Tibial artery (tissue), 4 donors: ENCODE measurements at regions of chr7 and their contacts with region 1.

Region 1: DNA sequence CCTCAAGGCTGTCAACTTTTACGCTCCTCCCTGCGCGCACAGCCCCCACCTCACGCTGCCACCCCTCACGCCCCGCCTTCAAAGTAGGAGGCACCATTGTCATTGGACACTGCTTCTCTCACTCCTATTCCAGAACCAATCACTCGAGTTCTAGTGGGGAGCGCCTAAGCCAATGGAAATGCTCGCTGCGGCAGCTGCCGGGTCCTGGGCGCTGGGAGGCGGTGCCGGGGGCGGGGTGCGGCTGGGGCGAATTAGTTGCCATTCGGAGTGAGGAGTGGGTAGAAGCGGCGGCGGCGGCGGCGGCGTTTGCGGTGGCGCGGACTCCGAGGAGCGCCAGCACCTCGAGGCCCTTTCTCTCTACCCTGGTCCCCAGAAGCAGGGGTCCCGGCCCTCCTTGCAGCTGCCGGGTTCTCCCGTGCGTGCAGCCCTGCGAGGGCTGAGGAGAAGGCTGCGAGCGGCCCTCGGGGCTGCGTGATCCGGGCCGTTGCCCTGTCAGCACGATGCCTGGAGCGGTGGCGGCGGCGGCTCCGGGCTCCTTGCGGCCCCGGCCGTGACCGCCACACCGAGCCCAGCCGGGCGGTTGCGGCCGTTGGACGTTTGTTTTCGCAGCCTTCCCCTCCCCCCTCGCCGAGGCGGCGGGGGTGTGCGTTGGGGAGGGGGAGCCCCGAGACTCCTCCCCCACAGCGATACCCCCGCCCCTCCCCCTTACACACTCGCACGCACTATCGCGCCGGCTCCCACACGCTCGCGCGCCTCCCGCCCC is at the start of gene GLCCI1:
- DNase-seq: peak; percentile 96 to 98
- H3K4me3 ChIP-seq: peak within 1 kb of the TSS; percentile 99
- H3K27ac ChIP-seq: peak within 1 kb of the TSS; percentile 98
- H3K4me1 ChIP-seq: peaks cover 0 to 30% (median 11%) of the 10 kb centered on the region in 4 donors
- H3K27me3 ChIP-seq: no peaks in the 10 kb centered on the region
- CTCF ChIP-seq: peak in 1 of 2 experiments; percentile 17

Region 2: GRCh38 chr7:7640221-7641128 is 328.2 kb before region 1 on chr7 and contains the start of gene UMAD1:
- intact Hi-C with region 1: loop called (anchors 10 kb)
- DNase-seq: peak; percentile 99
- H3K4me3 ChIP-seq: peak within 1 kb of the TSS; percentile 69 to 77
- H3K27ac ChIP-seq: peak within 1 kb of the TSS; percentile 86 to 90
- H3K4me1 ChIP-seq: peaks cover 0 to 15% (median 2%) of the 10 kb centered on the region in 4 donors
- H3K27me3 ChIP-seq: no peaks in the 10 kb centered on the region
- CTCF ChIP-seq: peak in 1 of 2 experiments; percentile 6

Region 3: GRCh38 chr7:7732566-7733290 is 236.0 kb before region 1 on chr7:
- intact Hi-C with region 1: no loop called
- DNase-seq: no peak
- H3K4me3 ChIP-seq: no peak overlapping the region
- H3K27ac ChIP-seq: peak overlapping the region; percentile 34
- H3K4me1 ChIP-seq: peaks cover 0 to 27% (median 13%) of the 10 kb centered on the region in 4 donors
- H3K27me3 ChIP-seq: no peaks in the 10 kb centered on the region
- CTCF ChIP-seq: no peak

Region 4: GRCh38 chr7:7746458-7746857 is 222.3 kb before region 1 on chr7:
- intact Hi-C with region 1: no loop called
- DNase-seq: no peak
- H3K4me3 ChIP-seq: no peak overlapping the region
- H3K27ac ChIP-seq: no peak overlapping the region
- H3K4me1 ChIP-seq: peaks cover 0 to 7% (median 0%) of the 10 kb centered on the region in 4 donors
- H3K27me3 ChIP-seq: no peaks in the 10 kb centered on the region
- CTCF ChIP-seq: no peak

Region 5: GRCh38 chr7:8022628-8023027 is 53.9 kb after region 1 on chr7:
- intact Hi-C with region 1: no loop called
- DNase-seq: no peak
- H3K4me3 ChIP-seq: no peak overlapping the region
- H3K27ac ChIP-seq: no peak overlapping the region
- H3K4me1 ChIP-seq: no peaks in the 10 kb centered on the region
- H3K27me3 ChIP-seq: no peaks in the 10 kb centered on the region
- CTCF ChIP-seq: no peak

Region 6: DNA sequence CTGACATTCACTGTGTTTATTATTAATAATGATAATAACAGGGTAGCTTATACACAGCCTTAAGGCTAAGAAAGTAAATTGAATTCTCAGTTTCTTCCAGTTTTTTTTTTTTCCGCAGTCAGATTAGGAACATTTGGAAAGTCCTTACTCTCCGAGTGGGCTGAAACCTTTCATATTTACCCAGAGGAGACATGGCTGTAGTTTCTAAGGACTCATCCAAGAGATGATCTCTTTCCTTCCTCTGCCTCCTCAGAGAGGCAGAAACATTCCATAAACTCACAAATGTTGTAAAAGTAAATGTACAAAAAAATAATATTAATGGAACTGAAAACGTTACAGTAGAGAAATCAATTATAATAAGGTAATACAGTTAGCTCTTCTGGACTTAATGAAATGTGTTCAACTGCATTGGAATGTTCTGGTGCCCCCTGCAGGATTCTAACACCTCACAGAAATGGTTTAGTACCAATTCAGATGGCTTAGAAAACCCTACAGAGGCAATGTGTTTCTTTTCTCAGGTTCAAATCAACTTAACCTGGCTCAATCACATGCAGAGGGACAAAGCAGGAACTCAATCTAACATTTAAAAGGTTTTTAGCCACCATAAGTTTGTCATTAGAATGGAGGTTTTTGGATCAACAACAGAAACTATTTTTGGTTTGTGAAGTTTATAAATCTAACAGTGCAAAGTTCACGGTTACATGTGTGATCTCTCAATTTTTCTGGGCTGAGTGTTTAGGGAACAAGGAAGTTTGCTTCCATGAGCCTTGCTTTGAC is 221.6 kb after region 1 on chr7:
- intact Hi-C with region 1: loop called (anchors 10 kb)
- DNase-seq: peak in 1 of 2 donors; percentile 59
- H3K4me3 ChIP-seq: no peak overlapping the region
- H3K27ac ChIP-seq: no peak overlapping the region
- H3K4me1 ChIP-seq: no peaks in the 10 kb centered on the region
- H3K27me3 ChIP-seq: no peaks in the 10 kb centered on the region
- CTCF ChIP-seq: peak; percentile 54 to 57

Region 7: GRCh38 chr7:8343556-8343955 is 374.8 kb after region 1 on chr7:
- intact Hi-C with region 1: no loop called
- DNase-seq: no peak
- H3K4me3 ChIP-seq: no peak overlapping the region
- H3K27ac ChIP-seq: no peak overlapping the region
- H3K4me1 ChIP-seq: no peaks in the 10 kb centered on the region
- H3K27me3 ChIP-seq: no peaks in the 10 kb centered on the region
- CTCF ChIP-seq: no peak